Activated CD4-positive, alpha-beta memory T cell treated with anti-CD3 and anti-CD28 coated beads for 36 hours (primary cell): ENCODE measurements at regions of chr2 and their contacts with region 1.

Region 1: GRCh38 chr2:64831134-64831976 is 157.8 kb upstream of the SLC1A4 start:
- DNase-seq: peak; percentile 97
- H3K4me3 Mint-ChIP-seq: peak overlapping the region; percentile 57
- H3K27ac Mint-ChIP-seq: peak overlapping the region; percentile 86
- H3K4me1 Mint-ChIP-seq: peaks cover 11% of the 10 kb centered on the region
- H3K27me3 Mint-ChIP-seq: no peaks in the 10 kb centered on the region

Region 2: DNA sequence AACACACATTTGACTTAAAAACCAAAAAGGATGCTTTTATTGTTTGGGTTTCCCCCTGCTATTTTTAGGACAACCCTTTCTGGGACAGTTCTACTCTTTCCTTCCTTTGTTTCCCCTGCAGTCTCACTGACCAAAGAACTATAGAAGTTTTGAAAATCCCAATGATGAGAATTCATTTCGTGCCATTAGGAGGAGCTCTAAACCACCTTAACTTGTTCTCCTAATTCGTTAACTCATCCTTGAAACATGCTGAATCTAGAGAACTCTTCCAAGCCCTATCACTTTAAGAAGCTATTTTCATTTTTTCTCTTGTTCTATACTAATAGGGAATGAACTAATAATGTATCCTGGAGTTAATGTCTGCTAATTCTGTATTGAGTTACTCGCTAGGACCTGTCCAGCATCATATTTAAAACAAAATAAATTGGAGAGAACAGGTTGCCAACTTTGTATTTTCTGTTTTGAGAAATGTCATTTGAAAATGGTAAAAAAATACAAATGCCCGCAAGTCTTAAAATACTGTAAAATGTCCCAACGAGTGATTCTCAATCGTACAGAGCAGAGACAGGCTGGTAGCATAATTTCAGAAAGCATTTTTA is 244.4 kb before region 1 on chr2:
- CTCF ChIA-PET with region 1: interaction called, 3 read pairs
- POLR2A ChIA-PET with region 1: no interaction called
- intact Hi-C with region 1: loop called (anchors 1 kb)
- DNase-seq: no peak
- H3K4me3 Mint-ChIP-seq: no peak overlapping the region
- H3K27ac Mint-ChIP-seq: no peak overlapping the region
- H3K4me1 Mint-ChIP-seq: peaks cover 10% of the 10 kb centered on the region
- H3K27me3 Mint-ChIP-seq: no peaks in the 10 kb centered on the region

Region 3: DNA sequence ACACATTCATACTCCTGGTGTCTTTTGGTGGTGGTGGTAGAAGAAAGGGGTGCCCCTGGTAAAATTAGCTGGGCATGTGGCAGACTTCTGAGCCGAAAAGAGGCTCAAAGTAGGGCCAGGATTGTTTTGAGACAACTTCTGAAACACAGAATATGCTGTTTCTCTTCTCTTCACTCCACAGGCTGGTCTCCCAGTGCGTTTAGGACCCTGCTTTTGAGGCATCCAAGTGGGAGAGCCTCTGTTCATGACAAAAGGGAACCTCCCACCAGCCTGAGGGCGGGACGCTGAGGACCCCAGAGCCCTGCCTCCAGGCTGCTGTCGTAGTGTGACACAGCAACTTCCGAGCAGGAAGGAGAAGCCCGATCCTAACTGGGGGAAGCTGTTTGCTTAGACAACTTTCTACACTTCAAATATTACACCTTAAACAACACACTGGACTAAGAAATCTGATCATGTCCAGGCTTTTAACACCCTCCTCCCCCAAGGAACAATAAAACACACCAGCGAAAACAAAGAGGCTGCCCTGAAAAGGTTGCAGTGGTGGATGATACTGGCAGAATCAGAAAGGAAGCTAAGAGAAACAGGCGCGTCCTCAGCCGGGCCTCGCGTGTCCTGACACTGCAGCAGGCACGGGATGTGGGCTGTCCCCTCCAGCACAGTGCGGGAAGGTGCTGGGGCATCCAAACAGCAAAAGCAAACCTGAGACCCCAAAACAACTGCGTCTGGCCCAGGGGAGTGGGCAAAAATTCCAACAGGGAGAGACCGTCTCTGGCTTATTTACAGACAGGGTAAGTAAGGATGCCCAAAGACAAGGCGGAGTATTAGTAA is 187.0 kb before region 1 on chr2:
- CTCF ChIA-PET with region 1: interaction called, 131 read pairs
- POLR2A ChIA-PET with region 1: no interaction called
- intact Hi-C with region 1: loop called (anchors 1 kb)
- DNase-seq: peak; percentile 63
- H3K4me3 Mint-ChIP-seq: peak overlapping the region; percentile 82
- H3K27ac Mint-ChIP-seq: peak overlapping the region; percentile 78
- H3K4me1 Mint-ChIP-seq: peaks cover 53% of the 10 kb centered on the region
- H3K27me3 Mint-ChIP-seq: no peaks in the 10 kb centered on the region

Region 4: DNA sequence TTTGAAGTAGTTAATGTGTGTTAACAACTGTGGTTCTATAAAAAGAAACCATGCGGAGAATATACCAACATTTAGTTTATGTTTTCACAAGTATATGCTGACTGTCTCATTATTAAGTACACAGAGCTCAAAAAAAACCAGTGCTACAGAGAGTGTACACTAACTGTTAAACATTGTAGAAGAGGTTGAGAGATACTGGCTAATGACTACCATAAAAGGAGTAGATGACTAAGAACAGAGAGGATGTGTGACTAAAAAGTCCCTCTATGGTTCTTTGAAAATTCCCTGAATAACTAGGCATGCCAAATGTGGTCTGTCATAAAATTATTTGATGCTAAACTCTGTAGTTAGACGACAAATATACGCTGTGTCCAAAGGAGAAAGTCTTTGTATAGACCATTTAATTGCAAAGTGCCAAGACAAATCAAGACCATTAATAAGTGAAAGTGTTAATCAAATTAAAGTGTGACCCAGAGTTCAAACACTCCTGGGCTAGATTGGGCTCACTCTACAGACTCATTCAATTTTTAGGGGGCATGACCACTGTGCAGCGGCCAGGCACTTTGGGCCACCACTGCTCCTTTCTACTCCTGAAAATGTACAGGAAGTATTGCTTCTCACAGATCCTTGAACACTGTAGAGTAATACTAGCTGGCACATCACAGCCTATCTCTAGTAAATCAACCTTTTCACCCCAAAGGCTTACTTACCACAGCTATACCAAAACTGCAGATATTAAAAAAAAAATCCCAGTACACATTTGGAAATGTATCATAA is 132.5 kb before region 1 on chr2:
- CTCF ChIA-PET with region 1: interaction called, 3 read pairs
- POLR2A ChIA-PET with region 1: interaction called, 3 read pairs
- intact Hi-C with region 1: loop called (anchors 1 kb)
- DNase-seq: no peak
- H3K4me3 Mint-ChIP-seq: peak overlapping the region; percentile 47
- H3K27ac Mint-ChIP-seq: peak overlapping the region; percentile 72
- H3K4me1 Mint-ChIP-seq: peaks cover 41% of the 10 kb centered on the region
- H3K27me3 Mint-ChIP-seq: no peaks in the 10 kb centered on the region

Region 5: GRCh38 chr2:64767670-64768468 is 63.5 kb before region 1 on chr2:
- CTCF ChIA-PET with region 1: interaction called, 8 read pairs
- POLR2A ChIA-PET with region 1: interaction called, 7 read pairs
- intact Hi-C with region 1: loop called (anchors 1 kb)
- DNase-seq: peak; percentile 84
- H3K4me3 Mint-ChIP-seq: peak overlapping the region; percentile 80
- H3K27ac Mint-ChIP-seq: peak overlapping the region; percentile 77
- H3K4me1 Mint-ChIP-seq: peaks cover 19% of the 10 kb centered on the region
- H3K27me3 Mint-ChIP-seq: no peaks in the 10 kb centered on the region

Region 6: GRCh38 chr2:64819774-64820696 is 11.3 kb before region 1 on chr2:
- CTCF ChIA-PET with region 1: interaction called, 33 read pairs
- POLR2A ChIA-PET with region 1: interaction called, 4 read pairs
- intact Hi-C with region 1: loop called (anchors 1 kb)
- DNase-seq: peak; percentile 83
- H3K4me3 Mint-ChIP-seq: peak overlapping the region; percentile 36
- H3K27ac Mint-ChIP-seq: peak overlapping the region; percentile 82
- H3K4me1 Mint-ChIP-seq: peaks cover 20% of the 10 kb centered on the region
- H3K27me3 Mint-ChIP-seq: no peaks in the 10 kb centered on the region

Region 7: DNA sequence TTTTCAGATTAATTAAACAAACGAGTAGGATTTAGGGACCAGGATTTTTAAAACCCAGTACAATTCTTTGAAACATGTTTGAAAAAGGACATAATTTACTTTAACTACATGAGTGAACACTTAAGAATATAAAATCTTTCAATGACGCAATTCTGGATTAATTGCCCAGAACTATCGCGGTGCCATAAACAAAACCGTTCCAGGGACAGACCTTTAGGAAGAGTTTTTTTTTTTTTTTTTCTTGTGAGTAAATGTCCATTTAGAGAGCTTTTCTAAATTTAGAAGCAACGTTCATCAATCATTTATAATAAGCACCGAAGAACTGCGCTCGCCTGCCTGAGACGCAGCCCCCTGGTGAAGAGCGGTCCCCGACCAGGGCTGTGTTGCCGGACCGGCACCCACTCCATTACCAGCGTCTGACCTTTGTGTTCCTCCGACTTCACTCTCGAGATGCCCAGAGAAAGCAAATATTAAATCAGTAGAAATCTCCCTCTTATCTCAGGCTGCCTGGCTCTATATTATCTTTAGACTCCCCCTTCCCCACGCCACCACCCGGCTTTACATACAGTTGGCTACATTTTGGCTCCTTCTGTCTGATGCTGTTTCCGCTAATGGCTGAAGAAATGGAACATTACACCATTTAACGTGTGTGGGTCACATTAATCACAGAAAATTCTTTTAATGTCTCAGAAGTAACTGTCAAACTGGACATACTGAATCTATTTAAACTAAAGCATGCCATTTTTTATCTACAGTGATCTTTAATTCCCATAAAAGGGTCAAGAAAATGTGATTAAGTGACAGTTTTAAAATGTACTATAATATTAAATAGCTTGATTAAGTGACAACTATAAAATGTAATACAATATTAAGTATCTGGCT is 1239.6 kb after region 1 on chr2:
- CTCF ChIA-PET with region 1: no interaction called
- POLR2A ChIA-PET with region 1: no interaction called
- intact Hi-C with region 1: no loop called
- DNase-seq: no peak
- H3K4me3 Mint-ChIP-seq: no peak overlapping the region
- H3K27ac Mint-ChIP-seq: no peak overlapping the region
- H3K4me1 Mint-ChIP-seq: no peaks in the 10 kb centered on the region
- H3K27me3 Mint-ChIP-seq: no peaks in the 10 kb centered on the region